Activated CD4-positive, alpha-beta T cell treated with anti-CD3 and anti-CD28 coated beads for 36 hours (primary cell): ENCODE measurements at regions of chr12 and their contacts with region 1.

Region 1: GRCh38 chr12:66693901-66694675 is 15.2 kb upstream of the GRIP1 start:
- DNase-seq: peak; percentile 44
- ATAC-seq: peak; percentile 92
- H3K4me3 Mint-ChIP-seq: no peak overlapping the region
- H3K27ac Mint-ChIP-seq: no peak overlapping the region
- H3K4me1 Mint-ChIP-seq: peaks cover 17% of the 10 kb centered on the region
- H3K27me3 Mint-ChIP-seq: peaks cover 3% of the 10 kb centered on the region

Region 2: DNA sequence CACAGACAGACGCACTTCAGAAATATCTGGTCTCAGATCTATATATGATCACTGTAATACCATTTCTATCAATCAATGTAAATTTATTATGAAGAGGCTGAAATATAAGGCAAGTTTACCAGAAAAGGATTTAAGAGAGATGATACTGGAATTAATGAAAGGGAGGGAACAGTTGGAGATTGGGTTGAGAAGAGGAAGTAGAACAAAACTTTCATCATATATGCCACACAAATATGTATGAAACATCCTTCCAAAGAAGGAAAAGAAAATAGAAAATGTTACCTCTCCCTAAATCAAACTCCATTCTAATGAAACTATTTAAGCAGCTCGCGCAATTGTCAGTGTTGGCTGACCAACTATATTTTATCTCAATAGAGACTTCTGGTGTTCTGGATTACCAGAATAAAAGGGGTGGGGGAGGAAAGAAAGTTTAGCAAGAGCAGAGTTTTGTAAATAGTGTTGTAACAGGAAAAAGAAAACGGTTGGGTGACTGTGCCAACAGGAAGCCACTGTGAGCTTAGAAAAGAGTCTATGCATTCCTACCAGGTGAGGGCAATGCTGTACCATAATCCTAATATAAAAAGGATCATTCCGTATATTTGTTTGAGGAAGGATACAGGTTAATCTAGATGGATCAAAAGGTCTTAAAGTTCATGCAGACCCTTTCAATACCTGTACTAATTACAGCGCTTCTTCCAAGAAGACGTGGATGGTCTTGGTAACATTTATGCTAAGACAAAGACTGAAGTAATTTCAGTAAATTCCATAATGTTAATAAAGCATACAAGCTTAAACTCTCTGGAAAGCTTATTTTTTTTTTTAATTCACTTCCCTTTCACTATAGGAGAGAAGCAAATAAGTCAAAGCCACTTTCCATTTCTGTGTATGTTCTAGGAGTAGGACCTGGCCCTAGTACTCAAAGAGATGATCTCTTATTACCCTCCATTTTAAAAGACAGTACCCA is 549.0 kb before region 1 on chr12:
- CTCF ChIA-PET with region 1: interaction called, 3 read pairs
- POLR2A ChIA-PET with region 1: no interaction called
- intact Hi-C with region 1: loop called in 1 of 2 experiments (anchors 5 kb)
- DNase-seq: peak; percentile 8
- ATAC-seq: peak; percentile 75
- H3K4me3 Mint-ChIP-seq: no peak overlapping the region
- H3K27ac Mint-ChIP-seq: peak overlapping the region; percentile 61
- H3K4me1 Mint-ChIP-seq: peaks cover 16% of the 10 kb centered on the region
- H3K27me3 Mint-ChIP-seq: no peaks in the 10 kb centered on the region

Region 3: GRCh38 chr12:66269757-66270383 is 424.2 kb before region 1 on chr12:
- CTCF ChIA-PET with region 1: interaction called, 11 read pairs
- POLR2A ChIA-PET with region 1: no interaction called
- intact Hi-C with region 1: loop called (anchors 1 to 5 kb)
- DNase-seq: peak; percentile 50
- ATAC-seq: peak; percentile 84
- H3K4me3 Mint-ChIP-seq: no peak overlapping the region
- H3K27ac Mint-ChIP-seq: no peak overlapping the region
- H3K4me1 Mint-ChIP-seq: peaks cover 4% of the 10 kb centered on the region
- H3K27me3 Mint-ChIP-seq: no peaks in the 10 kb centered on the region

Region 4: DNA sequence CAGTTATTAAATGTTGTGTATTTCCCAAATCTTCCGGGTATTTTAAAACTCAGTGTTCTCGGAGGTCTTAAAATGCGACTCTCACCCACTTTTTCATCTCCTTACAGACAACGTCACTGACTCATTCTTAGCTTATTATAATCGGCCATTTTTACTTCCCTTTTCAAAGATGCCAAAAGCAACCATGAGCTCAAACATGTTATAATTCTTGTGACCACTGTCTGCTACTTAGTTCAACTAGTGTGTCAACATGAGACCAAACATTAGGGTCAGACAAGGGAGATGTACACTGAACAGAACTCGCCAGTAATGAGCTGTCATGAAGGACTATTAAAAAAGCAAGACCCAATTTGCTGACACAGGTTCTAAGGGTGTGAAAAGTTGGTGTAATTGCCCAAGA is 11.0 kb before region 1 on chr12:
- CTCF ChIA-PET with region 1: interaction called, 11 read pairs
- POLR2A ChIA-PET with region 1: no interaction called
- intact Hi-C with region 1: no loop called
- DNase-seq: no peak
- ATAC-seq: no peak
- H3K4me3 Mint-ChIP-seq: no peak overlapping the region
- H3K27ac Mint-ChIP-seq: no peak overlapping the region
- H3K4me1 Mint-ChIP-seq: no peaks in the 10 kb centered on the region
- H3K27me3 Mint-ChIP-seq: peaks cover 8% of the 10 kb centered on the region

Region 5: DNA sequence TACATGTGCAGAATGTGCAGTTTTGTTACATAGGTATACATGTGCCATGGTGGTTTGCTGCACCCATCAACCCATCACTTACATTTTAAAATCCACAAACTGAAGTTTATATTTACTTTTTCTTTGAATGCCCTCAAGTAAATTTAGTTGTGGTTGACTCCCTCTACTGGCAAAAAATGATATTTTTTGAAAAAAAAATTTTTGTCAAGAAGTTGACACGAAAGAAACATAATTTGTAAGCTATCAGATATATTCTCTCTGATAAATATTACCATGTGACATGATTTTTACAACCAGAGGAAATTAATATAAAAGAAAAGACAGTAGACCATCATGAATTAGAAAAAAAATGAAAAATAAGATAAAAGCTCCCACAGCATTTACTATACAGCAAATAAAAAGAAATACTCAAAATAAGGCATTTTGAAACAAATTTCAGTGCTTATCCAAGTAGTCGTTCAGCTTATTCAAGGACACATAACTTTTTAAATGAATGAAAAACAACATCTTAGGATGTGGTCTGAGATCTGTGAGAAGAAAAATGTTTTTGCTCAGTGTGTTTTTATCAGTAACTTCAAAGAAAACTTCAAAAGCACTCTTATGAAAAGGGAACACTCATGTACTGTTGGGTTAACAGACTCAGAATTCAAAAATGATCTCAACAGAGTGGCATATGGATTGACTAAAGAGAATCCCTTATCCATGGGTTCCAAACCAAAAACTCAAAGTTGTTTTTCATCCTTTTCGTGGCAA is 14.8 kb after region 1 on chr12:
- CTCF ChIA-PET with region 1: interaction called, 56 read pairs
- POLR2A ChIA-PET with region 1: no interaction called
- intact Hi-C with region 1: no loop called
- DNase-seq: no peak
- ATAC-seq: peak; percentile 33
- H3K4me3 Mint-ChIP-seq: no peak overlapping the region
- H3K27ac Mint-ChIP-seq: no peak overlapping the region
- H3K4me1 Mint-ChIP-seq: peaks cover 23% of the 10 kb centered on the region
- H3K27me3 Mint-ChIP-seq: peaks cover 2% of the 10 kb centered on the region

Region 6: GRCh38 chr12:66763467-66763866 is 69.4 kb after region 1 on chr12:
- CTCF ChIA-PET with region 1: no interaction called
- POLR2A ChIA-PET with region 1: no interaction called
- intact Hi-C with region 1: no loop called
- DNase-seq: no peak
- ATAC-seq: no peak
- H3K4me3 Mint-ChIP-seq: no peak overlapping the region
- H3K27ac Mint-ChIP-seq: no peak overlapping the region
- H3K4me1 Mint-ChIP-seq: peaks cover 25% of the 10 kb centered on the region
- H3K27me3 Mint-ChIP-seq: no peaks in the 10 kb centered on the region